ENCODE measurements at regions of chr3 and their contacts with region 1.

Region 1: DNA sequence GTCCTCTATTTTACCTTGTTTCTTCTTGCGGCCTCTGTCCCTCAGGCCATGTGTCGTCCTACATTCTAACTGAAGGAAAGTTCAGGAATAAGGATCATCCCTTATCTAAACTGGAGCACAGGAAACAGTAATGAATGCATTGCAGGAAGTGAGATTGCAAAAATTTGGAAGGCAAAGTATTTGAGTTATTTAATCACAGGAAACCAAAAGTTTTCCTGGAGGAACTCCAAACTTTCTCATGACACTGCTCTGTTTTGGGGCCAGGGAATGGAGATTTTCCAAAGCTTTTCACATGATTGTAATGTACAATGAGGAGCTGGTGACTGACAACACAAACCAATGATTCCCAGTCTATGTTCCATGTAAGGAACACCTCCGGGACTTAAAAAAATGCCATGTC is 57.8 kb upstream of the PLSCR4 start:
- DNase-seq: no peak
- ATAC-seq: peak; percentile 73

Region 2: DNA sequence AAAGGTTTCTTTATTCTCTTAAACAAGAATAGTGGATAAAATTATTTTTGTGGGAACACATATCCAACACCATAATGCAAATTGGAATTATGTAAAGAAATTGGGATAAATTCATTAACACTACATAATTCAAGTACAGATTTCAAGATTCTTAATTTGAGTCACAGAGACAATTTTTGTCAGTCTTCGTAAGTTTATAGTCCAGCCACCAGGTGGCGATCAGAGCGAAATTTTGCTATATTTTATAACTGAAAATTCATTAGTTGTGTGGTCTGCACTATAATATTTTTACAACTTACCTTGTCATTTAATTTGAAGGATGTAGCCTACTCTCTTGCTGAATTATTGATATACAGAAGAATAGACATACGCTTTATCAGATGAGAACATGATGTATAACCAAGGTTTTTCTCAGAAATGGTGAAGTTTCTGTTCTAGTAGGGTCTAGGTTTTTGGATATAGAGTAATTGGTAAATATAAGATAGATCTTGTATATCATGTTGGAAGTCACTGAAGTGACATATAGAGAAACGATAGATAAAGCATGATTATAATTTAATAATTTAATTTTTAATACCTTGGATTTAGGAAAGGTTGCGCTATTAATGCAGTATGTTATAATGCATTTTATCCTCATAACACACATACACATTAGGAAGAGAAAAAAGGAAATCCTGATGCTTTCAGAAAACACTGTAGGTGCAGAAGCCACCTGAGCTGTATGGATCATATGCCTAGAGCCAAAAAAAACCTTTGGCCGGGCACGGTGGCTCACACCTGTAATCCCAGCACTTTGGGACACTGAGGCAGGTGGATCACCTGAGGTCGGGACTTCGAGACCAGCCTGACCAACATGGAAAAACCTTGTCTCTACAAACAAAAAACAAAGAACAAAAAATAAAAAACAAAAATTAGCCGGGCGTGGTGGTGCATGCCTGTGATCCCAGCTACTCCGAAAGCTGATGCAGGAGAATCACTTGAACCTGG is 89.5 kb before region 1 on chr3:
- intact Hi-C with region 1: loop called (anchors 5 kb)
- DNase-seq: no peak
- ATAC-seq: no peak

Region 3: GRCh38 chr3:146277953-146278631 is 30.6 kb before region 1 on chr3:
- intact Hi-C with region 1: no loop called
- DNase-seq: no peak
- ATAC-seq: peak; percentile 64